ENCODE measurements at regions of chr7 and their contacts with region 1.

Region 1: DNA sequence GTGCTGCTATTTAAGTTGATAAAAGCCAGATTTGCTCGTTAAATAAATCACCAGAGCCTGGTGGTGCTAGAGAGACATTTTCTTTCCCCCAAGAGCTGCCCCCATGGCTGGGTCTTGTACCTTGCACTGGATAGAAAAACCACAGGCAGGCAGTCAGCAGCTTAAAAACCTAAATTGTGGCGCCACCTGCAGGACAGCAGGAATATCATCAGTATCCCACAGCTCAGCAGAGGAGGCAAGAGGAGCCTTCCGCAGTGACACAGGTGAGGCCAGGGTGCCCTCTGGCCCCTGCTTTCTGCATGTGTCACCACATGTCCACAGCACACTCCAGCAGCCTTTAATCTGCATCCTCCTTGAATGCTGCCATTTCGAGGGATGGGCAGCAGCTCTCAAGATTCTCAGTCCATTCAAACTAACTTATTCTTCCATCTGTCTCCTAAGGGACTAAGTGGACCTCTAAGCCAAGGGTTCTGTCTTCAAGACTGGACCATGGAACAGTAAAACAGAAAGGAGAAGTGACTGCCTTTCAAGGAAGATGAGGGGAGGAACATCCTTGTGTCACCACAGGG is 4.5 kb upstream of the PLXNA4 start:
- DNase-seq: peak; percentile 87
- H3K4me3 Mint-ChIP-seq: no peak overlapping the region
- H3K27ac Mint-ChIP-seq: no peak overlapping the region
- H3K4me1 Mint-ChIP-seq: peaks cover 12% of the 10 kb centered on the region
- H3K27me3 Mint-ChIP-seq: peaks cover 41% of the 10 kb centered on the region

Region 2: DNA sequence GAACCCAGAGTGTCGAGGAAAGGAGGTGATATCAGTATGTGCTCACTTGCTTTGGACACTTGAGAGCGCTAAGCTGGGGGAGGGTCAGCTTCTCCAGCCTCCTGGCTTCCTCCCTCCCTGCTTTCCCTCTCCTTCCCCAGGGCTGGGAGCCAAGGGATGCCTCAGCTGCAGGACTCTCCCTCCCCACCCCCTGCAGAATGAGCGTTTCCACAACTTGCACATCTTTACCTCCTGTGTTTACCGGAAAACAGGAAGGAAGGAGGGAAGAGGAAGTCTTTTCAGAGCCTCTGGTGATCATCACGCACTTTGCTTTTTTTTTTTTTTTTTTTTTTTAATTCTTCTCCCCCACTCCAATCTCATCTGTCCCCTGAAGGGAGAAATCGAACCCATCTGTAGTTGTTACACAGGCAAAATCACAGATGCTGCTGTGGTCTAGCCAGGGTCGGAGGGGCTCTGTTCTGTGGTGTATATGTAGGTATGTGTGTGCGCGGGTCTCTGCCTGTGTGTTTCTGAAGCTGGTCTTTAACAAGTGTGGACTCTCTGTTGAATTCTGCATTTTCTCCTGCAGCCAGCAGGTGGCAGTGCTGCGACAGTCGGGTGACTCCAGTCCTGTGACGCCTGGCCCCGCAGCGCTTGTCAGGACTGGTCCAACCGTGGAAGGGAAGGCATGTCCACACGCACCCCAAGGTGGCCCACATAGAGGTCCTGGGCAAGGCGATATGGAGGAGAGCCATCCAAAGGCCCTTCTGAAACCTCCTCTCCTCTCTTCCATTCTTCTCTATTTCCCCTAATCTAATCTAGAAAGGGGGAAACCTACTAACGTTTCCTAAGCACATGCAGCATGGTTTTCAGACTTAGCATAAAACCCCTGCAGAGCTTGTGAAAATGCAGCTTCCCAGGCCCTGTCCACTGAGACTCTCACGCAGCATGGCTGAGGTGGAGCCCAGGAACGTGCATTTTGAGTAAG is 262.2 kb before region 1 on chr7:
- CTCF ChIA-PET with region 1: interaction called, 13 read pairs
- POLR2A ChIA-PET with region 1: no interaction called
- DNase-seq: peak; percentile 83
- H3K4me3 Mint-ChIP-seq: no peak overlapping the region
- H3K27ac Mint-ChIP-seq: peak overlapping the region; percentile 33
- H3K4me1 Mint-ChIP-seq: peaks cover 21% of the 10 kb centered on the region
- H3K27me3 Mint-ChIP-seq: peaks cover 46% of the 10 kb centered on the region

Region 3: GRCh38 chr7:132394283-132395198 is 186.3 kb before region 1 on chr7:
- CTCF ChIA-PET with region 1: interaction called, 37 read pairs
- POLR2A ChIA-PET with region 1: no interaction called
- DNase-seq: peak; percentile 61
- H3K4me3 Mint-ChIP-seq: no peak overlapping the region
- H3K27ac Mint-ChIP-seq: peak overlapping the region; percentile 59
- H3K4me1 Mint-ChIP-seq: peaks cover 32% of the 10 kb centered on the region
- H3K27me3 Mint-ChIP-seq: peaks cover 10% of the 10 kb centered on the region

Region 4: GRCh38 chr7:132568962-132569361 is 11.8 kb before region 1 on chr7:
- CTCF ChIA-PET with region 1: interaction called, 10 read pairs
- POLR2A ChIA-PET with region 1: no interaction called
- DNase-seq: no peak
- H3K4me3 Mint-ChIP-seq: no peak overlapping the region
- H3K27ac Mint-ChIP-seq: no peak overlapping the region
- H3K4me1 Mint-ChIP-seq: peaks cover 20% of the 10 kb centered on the region
- H3K27me3 Mint-ChIP-seq: peaks cover 86% of the 10 kb centered on the region

Region 5: DNA sequence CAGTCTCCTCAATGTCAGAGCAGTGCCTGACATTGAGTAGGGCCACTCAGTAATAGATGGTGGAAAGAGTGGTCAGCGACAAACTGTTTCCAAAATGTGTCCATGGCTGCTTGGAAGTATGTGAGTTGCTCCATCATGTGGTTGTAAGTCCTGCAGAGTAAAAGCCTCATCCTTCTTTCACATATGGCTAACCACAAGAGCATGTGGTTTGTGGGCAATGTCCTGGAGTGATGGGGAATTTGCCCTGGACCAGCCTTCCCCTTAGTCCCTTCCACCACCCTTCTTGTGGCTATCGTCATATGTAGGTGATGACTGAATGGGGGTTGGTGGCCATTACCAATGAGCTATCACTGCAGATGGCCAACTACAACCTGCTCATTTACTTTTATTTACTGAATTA is 28.4 kb after region 1 on chr7:
- CTCF ChIA-PET with region 1: no interaction called
- POLR2A ChIA-PET with region 1: no interaction called
- DNase-seq: no peak
- H3K4me3 Mint-ChIP-seq: no peak overlapping the region
- H3K27ac Mint-ChIP-seq: no peak overlapping the region
- H3K4me1 Mint-ChIP-seq: peaks cover 2% of the 10 kb centered on the region
- H3K27me3 Mint-ChIP-seq: no peaks in the 10 kb centered on the region

Measured in activated CD4-positive, alpha-beta T cell treated with anti-CD3 and anti-CD28 coated beads, Interleukin-2, amount 10 ng/mL, durations not matched to agents 7 days and 5 days (primary cell).